H1 (cell line): ENCODE measurements at regions of chr1 and their contacts with region 1.

Region 1: DNA sequence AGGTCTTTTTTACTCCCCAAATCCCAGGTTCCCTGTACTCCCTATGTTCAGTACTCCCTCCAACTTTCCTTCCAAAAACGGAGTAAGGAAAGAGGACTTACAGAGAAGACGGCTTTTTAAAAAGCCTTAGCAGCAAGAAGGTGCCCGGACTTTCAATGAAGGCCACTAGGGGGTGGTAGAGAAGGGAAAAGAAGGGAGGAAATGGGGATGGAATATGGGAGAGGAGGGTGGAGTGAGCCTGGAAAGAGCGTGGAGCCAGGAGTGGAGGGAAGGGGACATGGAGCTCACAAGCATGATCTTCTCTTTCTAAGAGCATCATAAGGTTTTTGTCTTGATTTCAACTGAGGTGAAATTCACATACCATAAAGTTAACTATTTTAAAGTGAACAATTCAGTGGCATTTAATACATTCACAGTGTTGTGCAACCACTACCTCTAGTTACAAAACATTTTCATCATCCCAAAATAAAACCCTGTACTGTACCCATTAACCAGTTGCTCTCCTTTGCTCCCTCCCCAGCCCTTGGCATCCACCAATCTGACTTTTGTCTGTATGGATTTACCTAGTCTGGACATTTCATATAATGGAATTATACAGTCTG is 129.9 kb downstream of the ZNF281 start:
- DNase-seq: peak; percentile 36 to 84
- H3K4me3 ChIP-seq: no peak overlapping the region
- H3K27ac ChIP-seq: no peak overlapping the region
- H3K4me1 ChIP-seq: peaks cover 0 to 4% (median 0%) of the 10 kb centered on the region in 4 experiments; a peak in 2 of 7 replicates
- H3K27me3 ChIP-seq: no peaks in the 10 kb centered on the region
- CTCF ChIP-seq: peak; percentile 26 to 89 (median 81)
- EP300 ChIP-seq: no peak
- POLR2A ChIP-seq: no peak
- RAD21 ChIP-seq: peak; percentile 88 to 91

Region 2: GRCh38 chr1:200161817-200162216 is 118.1 kb before region 1 on chr1:
- CTCF ChIA-PET with region 1: interaction called, 10 read pairs
- POLR2A ChIA-PET with region 1: no interaction called
- DNase-seq: no peak
- H3K4me3 ChIP-seq: no peak overlapping the region
- H3K27ac ChIP-seq: no peak overlapping the region
- H3K4me1 ChIP-seq: no peaks in the 10 kb centered on the region; a peak in 1 of 7 replicates
- H3K27me3 ChIP-seq: peaks cover 0 to 1% (median 0%) of the 10 kb centered on the region in 4 experiments; a peak in 1 of 7 replicates
- CTCF ChIP-seq: no peak
- EP300 ChIP-seq: no peak
- POLR2A ChIP-seq: no peak
- RAD21 ChIP-seq: no peak

Region 3: DNA sequence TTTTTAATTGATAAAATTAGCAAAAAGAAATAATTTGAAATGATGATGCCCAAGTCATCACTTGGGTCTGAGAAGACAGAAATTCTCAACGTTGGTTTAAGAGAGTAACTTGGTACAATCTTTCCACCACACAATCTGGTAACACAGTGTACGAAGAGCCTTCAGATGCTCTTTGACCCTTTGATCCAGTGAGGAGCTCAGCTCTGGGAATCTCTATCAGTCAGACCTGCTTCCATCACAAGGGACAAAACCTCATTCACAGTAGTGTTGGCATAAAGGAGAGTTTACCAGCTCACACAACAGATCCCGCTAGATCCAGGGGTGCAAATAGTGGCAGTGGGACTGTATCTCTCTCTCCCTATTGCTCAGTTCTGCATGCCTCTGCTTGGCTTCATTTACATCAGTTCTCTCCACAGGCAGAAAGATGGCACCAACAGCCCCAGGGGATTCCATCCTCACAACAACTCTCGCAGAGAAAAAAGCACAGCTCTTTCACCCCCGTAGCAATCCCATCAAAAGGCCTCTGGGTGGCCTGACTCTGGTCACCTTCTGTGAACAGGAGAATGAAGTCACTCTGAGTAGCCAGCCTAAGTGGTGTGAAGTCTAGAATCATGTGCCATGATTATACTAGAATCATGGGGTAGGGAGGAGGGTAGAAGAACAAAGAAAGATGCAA is 10.2 kb after region 1 on chr1:
- CTCF ChIA-PET with region 1: interaction called, 37 read pairs
- POLR2A ChIA-PET with region 1: interaction called, 3 read pairs
- DNase-seq: no peak
- H3K4me3 ChIP-seq: no peak overlapping the region
- H3K27ac ChIP-seq: no peak overlapping the region
- H3K4me1 ChIP-seq: peaks cover 0 to 3% (median 2%) of the 10 kb centered on the region in 4 experiments; a peak in 4 of 7 replicates
- H3K27me3 ChIP-seq: peaks cover 0 to 7% (median 2%) of the 10 kb centered on the region in 4 experiments; a peak in 3 of 7 replicates
- CTCF ChIP-seq: peak; percentile 19 to 49 (median 47)
- EP300 ChIP-seq: no peak
- POLR2A ChIP-seq: no peak
- RAD21 ChIP-seq: peak; percentile 39 to 62

Region 4: GRCh38 chr1:200372080-200372884 is 92.4 kb after region 1 on chr1:
- CTCF ChIA-PET with region 1: interaction called, 18 read pairs
- POLR2A ChIA-PET with region 1: no interaction called
- DNase-seq: peak; percentile 36 to 43
- H3K4me3 ChIP-seq: peak overlapping the region in 1 of 4 experiments; percentile 56; a peak in 1 of 8 replicates
- H3K27ac ChIP-seq: no peak overlapping the region
- H3K4me1 ChIP-seq: peaks cover 2 to 25% (median 11%) of the 10 kb centered on the region in 4 experiments; a peak in 6 of 7 replicates
- H3K27me3 ChIP-seq: no peaks in the 10 kb centered on the region
- CTCF ChIP-seq: no peak
- EP300 ChIP-seq: no peak
- POLR2A ChIP-seq: no peak
- RAD21 ChIP-seq: no peak

Region 5: GRCh38 chr1:200457810-200458209 is 177.9 kb after region 1 on chr1:
- CTCF ChIA-PET with region 1: interaction called, 12 read pairs
- POLR2A ChIA-PET with region 1: no interaction called
- DNase-seq: no peak
- H3K4me3 ChIP-seq: no peak overlapping the region
- H3K27ac ChIP-seq: no peak overlapping the region
- H3K4me1 ChIP-seq: peaks cover 4 to 7% (median 5%) of the 10 kb centered on the region in 4 experiments; a peak in 6 of 7 replicates
- H3K27me3 ChIP-seq: no peaks in the 10 kb centered on the region
- CTCF ChIP-seq: no peak
- EP300 ChIP-seq: no peak
- POLR2A ChIP-seq: no peak
- RAD21 ChIP-seq: no peak

Region 6: DNA sequence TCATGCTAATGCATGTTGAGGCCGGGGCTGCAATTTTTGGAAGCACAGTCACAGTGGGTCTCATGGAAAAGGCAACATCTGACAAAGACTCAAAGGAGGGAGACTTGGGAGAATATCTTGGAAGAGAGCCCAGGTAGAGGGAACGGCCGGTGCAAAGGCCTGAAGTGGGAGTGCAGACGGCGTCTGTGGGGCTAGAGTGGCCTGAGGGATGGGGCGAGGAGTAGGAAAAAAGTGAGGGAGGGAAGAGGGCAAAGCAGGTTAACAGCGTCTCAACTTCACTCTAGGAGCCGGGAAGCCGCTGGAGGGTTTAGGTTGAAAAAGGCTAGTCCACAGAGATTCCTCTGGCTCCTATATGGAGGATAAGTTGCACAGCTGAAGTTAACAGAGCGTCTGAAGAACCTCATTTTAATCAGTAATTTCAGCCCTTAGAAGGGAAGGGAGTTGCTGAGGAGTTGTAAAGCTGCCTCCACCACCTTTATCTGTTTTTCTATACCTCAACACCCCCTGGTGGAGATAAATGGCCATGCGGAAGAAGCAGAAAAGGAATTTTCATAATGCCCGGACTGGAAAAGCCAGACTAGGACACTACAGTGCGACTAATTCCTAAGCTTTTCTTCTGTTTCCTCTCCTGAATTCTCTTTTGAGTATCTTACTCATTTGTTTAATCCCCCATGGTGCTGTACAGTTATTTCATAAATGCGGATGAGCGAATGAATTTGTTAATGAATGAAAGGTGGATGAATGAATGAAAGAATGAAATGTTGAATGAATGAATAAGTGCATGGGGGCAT is 208.7 kb after region 1 on chr1:
- CTCF ChIA-PET with region 1: interaction called, 76 read pairs
- POLR2A ChIA-PET with region 1: interaction called, 3 read pairs
- DNase-seq: peak in 1 of 2 experiments; percentile 67
- H3K4me3 ChIP-seq: peak overlapping the region in 1 of 4 experiments; percentile 33; a peak in 3 of 8 replicates
- H3K27ac ChIP-seq: no peak overlapping the region
- H3K4me1 ChIP-seq: peaks cover 0 to 2% (median under 1%) of the 10 kb centered on the region in 4 experiments; a peak in 1 of 7 replicates
- H3K27me3 ChIP-seq: no peaks in the 10 kb centered on the region
- CTCF ChIP-seq: peak in 2 of 3 experiments; percentile 69 to 83; a peak in 3 of 4 replicates
- EP300 ChIP-seq: no peak
- POLR2A ChIP-seq: no peak
- RAD21 ChIP-seq: peak; percentile 92 to 94